IMR-90 (cell line): ENCODE measurements at regions of chr2 and their contacts with region 1.

Region 1: DNA sequence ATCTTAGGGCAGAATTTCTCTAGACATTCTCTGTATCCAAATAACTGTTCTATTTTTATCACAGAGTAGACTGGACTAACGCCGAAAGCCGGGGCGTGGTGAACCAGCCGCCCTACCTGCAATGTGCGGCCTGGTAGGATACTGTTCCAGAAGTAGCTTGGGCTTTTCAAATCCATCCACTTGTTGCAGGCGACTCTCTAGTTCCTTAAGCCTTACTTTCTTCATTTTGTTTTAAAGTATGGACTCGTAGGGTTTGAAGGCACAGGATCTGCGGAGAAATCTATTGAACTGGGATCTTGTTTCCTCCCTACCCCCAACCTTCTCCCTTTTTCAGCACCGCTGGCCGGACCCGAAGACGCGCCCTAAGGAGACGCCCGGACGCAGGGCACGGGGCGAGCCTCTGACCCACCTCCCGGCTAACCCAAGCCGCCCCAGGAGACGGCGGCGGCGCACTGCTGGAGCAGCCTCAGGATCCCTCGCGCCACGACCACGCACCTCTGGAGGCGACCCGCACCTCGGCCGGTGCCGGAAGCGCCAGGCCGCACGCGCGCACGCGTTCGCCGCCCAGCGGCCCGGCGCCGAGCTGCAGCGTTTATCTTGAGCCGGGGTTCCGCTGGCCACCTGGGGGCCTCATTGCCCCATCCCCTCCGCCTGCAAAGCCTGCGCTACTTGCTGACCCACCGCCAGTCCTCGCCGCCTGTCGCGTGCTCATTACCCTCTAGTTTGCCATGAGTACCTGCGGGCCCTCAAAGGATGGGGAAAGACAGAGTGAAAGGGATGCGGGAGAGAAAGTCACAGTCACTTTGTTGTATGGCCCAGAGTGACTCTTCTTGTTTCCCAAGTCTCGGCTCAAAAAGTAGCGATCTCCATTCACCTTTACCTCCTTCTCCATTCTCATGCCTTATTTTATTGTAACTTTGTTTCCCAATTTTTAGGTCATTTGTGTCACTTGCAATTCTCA is at the start of gene METTL5:
- DNase-seq: peak; percentile 70
- ATAC-seq: peak; percentile 64
- H3K4me3 ChIP-seq: peak within 1 kb of the TSS; percentile 72
- H3K27ac ChIP-seq: peak within 1 kb of the TSS; percentile 88
- H3K4me1 ChIP-seq: peaks cover 4% of the 10 kb centered on the region
- H3K27me3 ChIP-seq: no peaks in the 10 kb centered on the region
- CTCF ChIP-seq: peak; percentile 99
- POLR2A ChIP-seq: no peak
- RAD21 ChIP-seq: peak; percentile 62
- total RNA-seq, gene METTL5: 49.8 and 81.9 TPM in 2 replicates

Region 2: GRCh38 chr2:169877398-169877797 is 52.7 kb after region 1 on chr2:
- CTCF ChIA-PET with region 1: interaction called, 4 read pairs
- POLR2A ChIA-PET with region 1: no interaction called
- dilution Hi-C with region 1: no loop called
- in situ Hi-C with region 1: no loop called
- intact Hi-C with region 1: loop called (anchors 5 kb)
- DNase-seq: peak; percentile 33
- ATAC-seq: peak; percentile 42; the same call in 1 of the 2 replicates
- H3K4me3 ChIP-seq: no peak overlapping the region
- H3K27ac ChIP-seq: no peak overlapping the region
- H3K4me1 ChIP-seq: peaks cover 2% of the 10 kb centered on the region; the same call in 1 of the 2 replicates
- H3K27me3 ChIP-seq: no peaks in the 10 kb centered on the region
- CTCF ChIP-seq: peak; percentile 45
- POLR2A ChIP-seq: no peak
- RAD21 ChIP-seq: peak; percentile 42

Region 3: GRCh38 chr2:169925968-169926367 is 101.3 kb after region 1 on chr2:
- CTCF ChIA-PET with region 1: interaction called, 4 read pairs
- POLR2A ChIA-PET with region 1: no interaction called
- dilution Hi-C with region 1: no loop called
- in situ Hi-C with region 1: no loop called
- intact Hi-C with region 1: loop called (anchors 2 kb)
- DNase-seq: no peak
- ATAC-seq: no peak
- H3K4me3 ChIP-seq: no peak overlapping the region
- H3K27ac ChIP-seq: no peak overlapping the region
- H3K4me1 ChIP-seq: no peaks in the 10 kb centered on the region
- H3K27me3 ChIP-seq: no peaks in the 10 kb centered on the region
- CTCF ChIP-seq: no peak
- POLR2A ChIP-seq: no peak
- RAD21 ChIP-seq: no peak

Region 4: GRCh38 chr2:170928824-170929685 is 1104.4 kb after region 1 on chr2 and contains the start of gene GORASP2:
- CTCF ChIA-PET with region 1: no interaction called
- POLR2A ChIA-PET with region 1: no interaction called
- dilution Hi-C with region 1: no loop called
- in situ Hi-C with region 1: loop called (anchors 25 kb)
- intact Hi-C with region 1: no loop called
- DNase-seq: peak; percentile 100
- ATAC-seq: peak; percentile 97
- H3K4me3 ChIP-seq: peak within 1 kb of the TSS; percentile 96
- H3K27ac ChIP-seq: peak within 1 kb of the TSS; percentile 86
- H3K4me1 ChIP-seq: peaks cover 2% of the 10 kb centered on the region; the same call in 1 of the 2 replicates
- H3K27me3 ChIP-seq: no peaks in the 10 kb centered on the region
- CTCF ChIP-seq: peak; percentile 88
- POLR2A ChIP-seq: peak; percentile 98
- RAD21 ChIP-seq: peak; percentile 41
- total RNA-seq, gene GORASP2: 53.1 and 60.5 TPM in 2 replicates